Lower leg skin (tissue), 4 donors: ENCODE measurements at regions of chr4 and their contacts with region 1.

Region 1: GRCh38 chr4:18733961-18734360 is 712.4 kb upstream of the LCORL start:
- DNase-seq: no peak
- H3K4me3 ChIP-seq: no peak overlapping the region
- CTCF ChIP-seq: no peak
- POLR2A ChIP-seq: no peak

Region 2: GRCh38 chr4:18262832-18263231 is 471.1 kb before region 1 on chr4:
- intact Hi-C with region 1: loop called (anchors 5 kb)
- DNase-seq: no peak
- H3K4me3 ChIP-seq: no peak overlapping the region
- CTCF ChIP-seq: no peak
- POLR2A ChIP-seq: no peak

Region 3: DNA sequence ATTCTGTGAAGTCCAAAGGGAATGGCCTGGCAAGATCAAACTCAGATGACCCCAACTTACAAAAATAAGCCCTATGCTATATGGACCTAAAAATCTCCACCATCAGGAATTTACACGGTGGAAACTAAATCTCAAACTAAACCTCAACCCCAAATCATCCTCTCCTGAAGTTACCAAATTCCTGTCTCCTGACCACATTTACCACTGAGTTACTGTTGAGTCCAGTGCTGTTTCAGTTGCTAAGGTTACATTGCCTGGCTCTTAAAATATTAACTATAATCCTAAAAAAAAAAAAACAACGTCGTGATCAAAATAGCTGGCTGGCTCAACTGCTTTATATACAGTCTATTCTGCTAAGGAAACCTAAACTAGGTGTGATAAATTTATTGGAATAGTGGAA is 1202.5 kb after region 1 on chr4:
- intact Hi-C with region 1: loop called (anchors 5 kb)
- DNase-seq: no peak
- H3K4me3 ChIP-seq: no peak overlapping the region
- CTCF ChIP-seq: no peak
- POLR2A ChIP-seq: no peak